ENCODE measurements at regions of chr1 and their contacts with region 1.

Region 1: GRCh38 chr1:15128520-15129313 is 24.8 kb upstream of the TMEM51 start:
- DNase-seq: peak in 1 of 2 donors; percentile 83
- H3K4me3 ChIP-seq: no peak overlapping the region
- H3K27ac ChIP-seq: no peak overlapping the region
- H3K4me1 ChIP-seq: no peaks in the 10 kb centered on the region
- H3K27me3 ChIP-seq: no peaks in the 10 kb centered on the region
- CTCF ChIP-seq: peak; percentile 80 to 89 (median 85)

Region 2: DNA sequence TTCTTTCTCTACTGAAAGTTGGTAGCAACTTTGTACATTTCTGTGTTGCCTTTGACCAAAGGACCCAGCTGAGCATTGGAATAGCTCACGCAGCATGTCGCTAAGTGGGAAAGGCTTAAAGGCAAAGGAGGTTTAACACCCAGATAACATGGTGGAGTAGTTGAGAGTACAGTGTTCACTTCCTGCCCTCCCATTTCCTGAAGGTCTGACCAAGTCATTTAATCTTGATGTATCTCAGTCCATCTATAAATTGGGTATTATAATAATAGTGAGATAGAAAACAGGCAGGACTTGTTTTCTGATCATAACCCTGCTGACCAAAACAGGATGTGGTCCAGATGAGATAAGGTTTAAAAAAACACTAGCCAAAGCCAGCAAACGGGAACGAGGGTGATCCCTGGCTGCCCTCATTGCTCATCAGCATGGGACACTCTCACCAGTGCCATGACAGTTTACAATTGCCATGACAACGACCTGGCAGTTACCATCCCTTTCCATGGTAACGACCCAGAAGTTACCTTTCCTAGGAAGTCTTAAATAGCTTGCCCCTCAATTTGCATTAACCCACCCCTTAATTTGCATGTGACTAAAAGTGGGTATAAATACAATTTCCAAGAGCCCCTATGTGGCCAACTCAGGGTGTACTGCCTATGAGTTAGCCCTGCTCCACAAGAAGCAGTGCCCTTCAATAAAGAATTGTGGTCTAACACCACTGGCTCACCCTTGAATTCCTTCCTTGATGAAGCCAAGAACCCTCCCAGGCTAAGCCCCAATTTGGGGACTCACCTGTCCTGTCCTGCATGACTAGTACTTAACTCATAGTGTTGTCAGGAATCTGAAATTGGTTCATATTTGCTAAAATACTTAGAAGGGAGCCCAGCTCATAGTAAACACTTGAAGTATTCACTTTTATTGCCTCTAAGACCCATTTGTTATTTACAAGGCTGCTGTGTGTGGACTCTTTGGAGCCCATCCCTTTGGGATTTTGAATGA is 89.9 kb after region 1 on chr1:
- intact Hi-C with region 1: no loop called
- DNase-seq: no peak
- H3K4me3 ChIP-seq: no peak overlapping the region
- H3K27ac ChIP-seq: no peak overlapping the region
- H3K4me1 ChIP-seq: peaks cover 10 to 11% of the 10 kb centered on the region in 2 donors
- H3K27me3 ChIP-seq: no peaks in the 10 kb centered on the region
- CTCF ChIP-seq: no peak

Region 3: DNA sequence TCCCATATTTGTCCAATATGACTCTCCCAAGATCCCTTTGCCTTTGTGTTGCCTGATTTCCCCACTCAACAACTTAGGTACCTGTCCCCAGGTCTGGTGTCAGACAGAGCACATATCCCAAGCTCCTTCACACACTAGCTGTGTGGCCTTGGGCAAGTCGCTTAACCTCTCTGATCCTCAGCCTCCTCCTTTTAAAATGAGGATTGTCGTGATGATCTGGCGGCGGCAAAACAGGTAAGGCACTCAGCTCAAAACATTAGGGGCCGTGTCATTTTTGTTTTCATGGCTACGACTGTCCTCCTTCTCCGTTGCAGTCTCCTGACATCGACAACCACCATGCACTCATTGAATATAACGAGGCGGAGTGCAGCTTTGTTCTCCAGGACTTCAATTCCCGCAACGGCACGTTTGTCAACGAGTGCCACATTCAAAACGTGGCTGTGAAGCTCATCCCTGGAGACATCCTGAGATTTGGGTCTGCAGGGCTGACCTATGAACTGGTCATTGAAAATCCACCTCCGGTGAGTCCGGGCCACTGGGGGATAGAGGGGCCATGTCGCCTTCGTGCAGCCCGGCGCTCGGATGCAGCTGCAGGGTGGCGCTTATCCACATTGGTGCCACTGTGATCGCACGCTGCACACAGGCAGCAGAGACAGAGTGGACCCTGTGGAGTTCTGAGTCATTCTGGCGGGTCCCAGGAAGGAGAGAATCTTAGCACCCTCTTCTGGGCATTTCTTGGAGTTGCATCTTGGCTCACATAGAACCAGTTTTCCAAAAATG is 143.5 kb after region 1 on chr1:
- intact Hi-C with region 1: loop called (anchors 1 kb)
- DNase-seq: peak in 1 of 2 donors; percentile 73
- H3K4me3 ChIP-seq: no peak overlapping the region
- H3K27ac ChIP-seq: no peak overlapping the region
- H3K4me1 ChIP-seq: no peaks in the 10 kb centered on the region
- H3K27me3 ChIP-seq: no peaks in the 10 kb centered on the region
- CTCF ChIP-seq: peak; percentile 72 to 85 (median 76)

Region 4: GRCh38 chr1:15304701-15305467 is 176.2 kb after region 1 on chr1:
- intact Hi-C with region 1: loop called (anchors 1 kb)
- DNase-seq: no peak
- H3K4me3 ChIP-seq: no peak overlapping the region
- H3K27ac ChIP-seq: no peak overlapping the region
- H3K4me1 ChIP-seq: no peaks in the 10 kb centered on the region
- H3K27me3 ChIP-seq: no peaks in the 10 kb centered on the region
- CTCF ChIP-seq: peak; percentile 64 to 72 (median 71)

Measured in ascending aorta (tissue), 2 donors.